CD8-positive, alpha-beta memory T cell (primary cell): ENCODE measurements at regions of chr3 and their contacts with region 1.

Region 1: DNA sequence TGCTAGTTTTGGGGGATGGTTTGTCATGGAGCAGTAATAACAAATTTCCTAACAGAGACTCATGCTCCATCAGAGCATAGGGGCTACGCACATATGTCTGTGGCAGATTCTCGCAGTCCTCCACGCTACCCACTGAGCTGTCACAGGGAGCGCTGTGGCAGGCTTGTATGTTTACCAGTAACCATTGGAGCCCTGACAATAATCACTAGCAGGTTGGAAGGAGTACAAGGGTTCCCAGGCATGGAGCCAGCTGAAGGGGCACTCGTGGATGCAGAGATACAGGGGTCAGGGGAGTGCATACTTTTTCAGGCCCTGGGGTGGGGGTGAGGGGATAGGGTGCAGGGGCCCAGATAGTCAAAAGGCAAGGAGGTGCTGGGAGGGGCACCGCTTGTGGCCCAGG is 7.9 kb upstream of the GP9 start:
- DNase-seq: no peak
- H3K4me3 ChIP-seq: no peak overlapping the region
- H3K4me3 Mint-ChIP-seq: peak overlapping the region in 1 of 7 donors; percentile 48
- H3K27ac ChIP-seq: no peak overlapping the region
- H3K27ac Mint-ChIP-seq: no peak overlapping the region
- H3K4me1 ChIP-seq: peaks cover 5% of the 10 kb centered on the region
- H3K4me1 Mint-ChIP-seq: peaks cover 5 to 8% (median 7%) of the 10 kb centered on the region in 3 donors
- H3K27me3 ChIP-seq: no peaks in the 10 kb centered on the region
- H3K27me3 Mint-ChIP-seq: peaks cover 0 to 5% of the 10 kb centered on the region in 2 donors

Region 2: GRCh38 chr3:128648940-128649663 is 403.6 kb before region 1 on chr3:
- CTCF ChIA-PET with region 1: no interaction called
- POLR2A ChIA-PET with region 1: no interaction called
- DNase-seq: no peak
- H3K4me3 ChIP-seq: peak overlapping the region; percentile 81
- H3K4me3 Mint-ChIP-seq: peak overlapping the region; percentile 86 to 100 (median 87)
- H3K27ac ChIP-seq: peak overlapping the region; percentile 96
- H3K27ac Mint-ChIP-seq: peak overlapping the region; percentile 31 to 99 (median 90)
- H3K4me1 ChIP-seq: peaks cover 28% of the 10 kb centered on the region
- H3K4me1 Mint-ChIP-seq: peaks cover 38 to 65% (median 48%) of the 10 kb centered on the region in 3 donors
- H3K27me3 ChIP-seq: no peaks in the 10 kb centered on the region
- H3K27me3 Mint-ChIP-seq: peaks cover 0 to 2% of the 10 kb centered on the region in 2 donors

Region 3: DNA sequence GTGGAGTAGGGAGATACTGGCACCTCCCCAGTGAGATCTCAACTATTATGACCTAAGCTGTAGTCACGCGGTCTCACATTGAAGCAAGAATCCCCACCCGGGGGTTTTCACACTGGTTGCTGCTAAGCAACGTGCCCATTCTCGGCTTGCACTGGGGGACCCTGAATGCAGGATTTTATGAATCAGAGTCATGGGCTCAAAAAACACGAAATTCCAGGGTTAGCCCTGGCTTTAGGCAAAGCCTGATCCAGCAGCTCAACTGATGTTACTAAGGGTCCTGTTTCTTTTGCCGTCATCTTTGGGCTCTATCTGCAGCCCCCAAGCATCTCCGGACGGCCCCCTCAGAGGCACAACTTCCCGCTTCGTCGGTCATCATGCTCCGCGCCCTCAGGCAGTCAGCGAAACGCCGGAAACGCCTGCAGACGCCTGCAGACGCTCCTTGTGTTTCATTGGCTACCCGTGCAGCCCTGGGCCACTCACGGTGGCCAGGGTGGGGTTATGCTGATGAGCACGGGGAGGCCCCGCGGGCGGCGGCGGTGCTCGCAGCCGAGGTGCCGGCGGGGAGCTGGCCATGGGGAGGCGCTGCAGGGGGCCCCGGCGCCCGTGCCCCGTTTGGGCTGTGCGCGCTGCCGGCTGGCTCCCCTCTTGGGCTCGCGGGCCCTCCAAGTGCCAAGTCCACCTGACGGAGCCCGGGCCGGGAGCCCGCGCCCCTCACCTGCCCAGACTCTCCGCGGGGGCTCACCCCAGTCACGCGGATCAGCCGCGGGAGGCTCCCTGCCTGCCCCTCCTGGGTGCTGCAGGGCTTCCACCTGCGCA is 25.7 kb before region 1 on chr3:
- CTCF ChIA-PET with region 1: interaction called, 29 read pairs
- POLR2A ChIA-PET with region 1: no interaction called
- DNase-seq: peak; percentile 89 to 95 (median 93)
- H3K4me3 ChIP-seq: peak overlapping the region; percentile 66
- H3K4me3 Mint-ChIP-seq: peak overlapping the region; percentile 26 to 93 (median 85)
- H3K27ac ChIP-seq: peak overlapping the region; percentile 77
- H3K27ac Mint-ChIP-seq: peak overlapping the region; percentile 92 to 99 (median 98)
- H3K4me1 ChIP-seq: peaks cover 16% of the 10 kb centered on the region
- H3K4me1 Mint-ChIP-seq: peaks cover 24 to 34% (median 24%) of the 10 kb centered on the region in 3 donors
- H3K27me3 ChIP-seq: no peaks in the 10 kb centered on the region
- H3K27me3 Mint-ChIP-seq: no peaks in the 10 kb centered on the region

Region 4: DNA sequence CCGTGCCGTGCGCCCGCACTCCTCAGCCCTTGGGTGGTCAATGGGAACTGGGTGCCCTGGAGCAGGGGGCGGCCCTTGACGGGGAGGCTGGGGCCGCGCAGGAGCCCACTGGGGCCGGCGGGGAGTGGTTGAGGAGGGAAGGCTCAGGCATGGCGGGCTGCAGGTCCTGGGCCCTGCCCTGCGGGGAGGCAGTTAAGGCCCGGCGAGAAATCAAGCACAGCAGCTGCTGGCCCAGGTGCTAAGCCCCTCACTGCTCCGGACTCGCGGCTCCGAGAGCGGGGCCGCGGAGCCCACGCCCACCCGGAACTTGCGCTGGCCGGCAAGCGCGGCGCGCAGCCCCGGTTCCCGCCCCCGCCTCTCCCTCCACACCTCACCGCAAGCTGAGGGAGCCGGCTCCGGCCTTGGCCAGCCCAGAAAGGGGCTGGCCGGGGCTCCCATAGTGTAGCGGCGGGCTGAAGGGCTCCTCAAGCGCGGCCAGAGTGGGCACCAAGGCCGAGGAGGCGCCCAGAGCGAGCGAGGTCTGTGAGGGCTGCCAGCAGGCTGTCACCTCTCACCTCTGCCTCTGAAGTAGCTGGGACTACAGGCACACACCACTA is 15.7 kb after region 1 on chr3:
- CTCF ChIA-PET with region 1: interaction called, 45 read pairs
- POLR2A ChIA-PET with region 1: no interaction called
- DNase-seq: no peak
- H3K4me3 ChIP-seq: no peak overlapping the region
- H3K4me3 Mint-ChIP-seq: peak overlapping the region in 6 of 7 donors; percentile 56 to 75 (median 66)
- H3K27ac ChIP-seq: no peak overlapping the region
- H3K27ac Mint-ChIP-seq: peak overlapping the region in 1 of 8 donors; percentile 82
- H3K4me1 ChIP-seq: no peaks in the 10 kb centered on the region
- H3K4me1 Mint-ChIP-seq: peaks cover 3 to 11% (median 5%) of the 10 kb centered on the region in 3 donors
- H3K27me3 ChIP-seq: no peaks in the 10 kb centered on the region
- H3K27me3 Mint-ChIP-seq: peaks cover 11 to 31% of the 10 kb centered on the region in 2 donors

Region 5: GRCh38 chr3:129120254-129121004 is 67.8 kb after region 1 on chr3:
- CTCF ChIA-PET with region 1: interaction called, 77 read pairs
- POLR2A ChIA-PET with region 1: interaction called, 8 read pairs
- DNase-seq: peak; percentile 81 to 94 (median 93)
- H3K4me3 ChIP-seq: peak overlapping the region; percentile 93
- H3K4me3 Mint-ChIP-seq: peak overlapping the region; percentile 83 to 95 (median 90)
- H3K27ac ChIP-seq: peak overlapping the region; percentile 80
- H3K27ac Mint-ChIP-seq: peak overlapping the region; percentile 87 to 98 (median 96)
- H3K4me1 ChIP-seq: peaks cover 45% of the 10 kb centered on the region
- H3K4me1 Mint-ChIP-seq: peaks cover 60 to 65% (median 62%) of the 10 kb centered on the region in 3 donors
- H3K27me3 ChIP-seq: no peaks in the 10 kb centered on the region
- H3K27me3 Mint-ChIP-seq: no peaks in the 10 kb centered on the region

Region 6: DNA sequence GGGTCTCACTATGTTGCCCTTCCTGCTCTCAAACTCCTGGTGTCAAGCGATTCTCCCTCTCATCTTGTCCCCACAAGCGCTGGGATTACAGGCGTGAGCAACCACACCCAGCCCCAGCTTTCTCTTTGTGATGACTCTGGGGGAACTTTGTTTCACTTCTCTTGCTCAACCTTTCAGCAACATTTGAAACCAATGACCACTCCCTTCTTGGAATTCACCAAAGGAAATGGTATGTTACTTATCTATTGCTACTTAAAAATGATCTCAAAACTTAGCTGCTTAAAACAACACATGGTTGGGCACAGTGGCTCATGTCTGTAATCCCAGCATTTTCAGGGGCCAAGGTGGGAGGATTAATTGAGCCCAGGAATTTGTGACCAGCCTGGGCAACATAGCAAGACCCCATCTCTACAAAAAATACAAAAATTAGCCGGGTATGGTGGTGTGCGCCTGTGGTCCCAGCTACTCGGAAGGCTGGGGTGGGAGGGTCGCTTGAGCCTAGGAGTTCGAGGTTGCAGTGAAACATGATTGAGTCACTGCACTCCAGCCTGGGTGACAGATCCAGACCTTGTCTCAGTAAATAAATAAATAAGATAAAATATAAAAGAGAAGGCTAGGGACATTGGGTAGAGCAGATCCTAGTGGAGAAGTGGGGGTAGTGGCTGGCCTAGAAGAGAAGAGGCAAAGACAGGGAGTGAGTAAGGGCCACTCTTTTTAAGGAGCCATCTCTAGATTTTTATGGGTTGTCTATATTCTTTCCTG is 186.5 kb after region 1 on chr3:
- CTCF ChIA-PET with region 1: interaction called, 79 read pairs
- POLR2A ChIA-PET with region 1: interaction called, 3 read pairs
- DNase-seq: no peak
- H3K4me3 ChIP-seq: no peak overlapping the region
- H3K4me3 Mint-ChIP-seq: peak overlapping the region in 1 of 7 donors; percentile 47
- H3K27ac ChIP-seq: peak overlapping the region; percentile 33
- H3K27ac Mint-ChIP-seq: peak overlapping the region in 3 of 8 donors; percentile 43 to 57 (median 43)
- H3K4me1 ChIP-seq: peaks cover 16% of the 10 kb centered on the region
- H3K4me1 Mint-ChIP-seq: peaks cover 3 to 12% (median 6%) of the 10 kb centered on the region in 3 donors
- H3K27me3 ChIP-seq: no peaks in the 10 kb centered on the region
- H3K27me3 Mint-ChIP-seq: peaks cover 1 to 4% of the 10 kb centered on the region in 2 donors